Naive thymus-derived CD4-positive, alpha-beta T cell (primary cell): ENCODE measurements at regions of chr3 and their contacts with region 1.

Region 1: DNA sequence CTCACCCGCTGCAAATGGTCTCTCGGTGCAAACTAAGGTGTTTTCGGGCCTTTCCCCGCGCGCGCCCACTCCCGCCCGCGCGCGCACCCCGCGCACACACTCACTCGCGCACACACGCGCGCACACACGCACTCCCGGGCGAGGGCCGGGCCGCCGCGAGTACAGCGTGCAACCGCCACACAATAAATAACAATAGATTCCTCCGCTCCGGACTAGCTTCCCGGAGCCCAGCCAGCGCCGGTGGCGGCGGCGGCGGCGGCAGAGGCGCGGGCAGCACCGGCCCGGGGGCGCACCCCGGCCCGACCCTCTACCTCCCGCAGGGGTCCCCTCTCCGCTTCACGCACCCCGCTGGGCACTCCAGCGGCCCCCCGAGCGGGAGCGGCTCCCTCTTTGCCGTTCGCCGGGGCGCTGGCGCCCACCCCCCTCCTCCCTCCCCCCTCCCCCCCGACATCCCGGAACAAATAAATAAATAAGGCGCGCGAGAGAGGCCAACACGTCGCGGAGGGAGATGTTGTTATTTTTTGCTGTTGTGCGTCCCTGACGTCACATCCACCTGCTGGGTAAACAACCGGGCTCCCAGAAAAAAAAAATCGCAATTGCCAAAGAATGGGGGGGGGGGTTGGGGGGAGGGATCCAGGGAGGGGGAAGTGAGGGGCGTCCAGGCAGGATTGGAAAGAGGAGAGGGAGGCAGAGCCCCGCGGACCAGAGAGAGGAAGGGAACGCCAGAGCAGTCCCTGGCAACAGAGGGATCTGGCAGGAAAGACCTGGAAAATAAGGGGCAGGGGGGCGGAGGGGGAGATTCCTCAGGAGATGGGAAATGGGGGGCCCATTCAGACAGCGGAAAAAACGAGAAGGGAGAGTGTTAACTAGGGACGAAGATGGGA is at the start of gene FOXP1:
- DNase-seq: peak; percentile 62 to 80 (median 72)
- ATAC-seq: peak; percentile 77
- H3K4me3 ChIP-seq: peak within 1 kb of the TSS; percentile 76
- H3K4me3 Mint-ChIP-seq: peak within 1 kb of the TSS; percentile 94 to 99 (median 98)
- H3K27ac ChIP-seq: peak within 1 kb of the TSS; percentile 85
- H3K27ac Mint-ChIP-seq: peak within 1 kb of the TSS; percentile 94 to 99 (median 98)
- H3K4me1 ChIP-seq: peaks cover 7 to 16% of the 10 kb centered on the region in 2 donors
- H3K4me1 Mint-ChIP-seq: peaks cover 12 to 44% (median 33%) of the 10 kb centered on the region in 7 donors
- H3K27me3 ChIP-seq: no peaks in the 10 kb centered on the region
- H3K27me3 Mint-ChIP-seq: peaks cover 0 to 38% (median 0%) of the 10 kb centered on the region in 5 donors
- total RNA-seq, gene FOXP1: 104 to 537 (median 456) TPM

Region 2: DNA sequence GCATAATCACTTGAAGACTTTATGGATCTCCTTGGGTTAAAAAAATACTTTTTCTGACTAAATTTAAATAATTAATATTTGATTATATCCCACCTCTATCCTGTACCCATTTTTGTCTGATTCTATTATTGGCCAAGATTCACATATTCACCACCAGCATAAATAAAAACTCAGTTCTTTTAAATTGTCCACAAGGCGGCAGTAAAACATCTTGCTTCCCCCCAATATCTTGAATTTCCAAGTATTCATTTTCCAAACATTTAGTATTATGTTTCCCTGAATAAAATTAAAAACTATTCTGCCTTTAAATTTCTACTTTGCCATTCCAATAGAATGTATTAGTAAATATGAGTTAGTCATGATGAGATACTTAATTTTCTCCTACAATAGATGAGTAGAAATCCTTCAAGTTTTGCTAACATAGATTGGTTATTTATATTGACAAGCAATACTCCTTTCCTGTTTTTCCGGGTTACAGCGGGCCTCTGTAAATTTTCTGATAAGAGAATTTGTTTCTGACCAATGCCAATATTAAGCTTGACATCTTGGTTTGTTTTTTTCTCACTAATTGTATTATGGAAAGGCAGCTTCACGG is 1052.6 kb before region 1 on chr3:
- CTCF ChIA-PET with region 1: no interaction called
- POLR2A ChIA-PET with region 1: no interaction called
- intact Hi-C with region 1: loop called (anchors 1 kb)
- DNase-seq: peak in 4 of 9 donors; percentile 4 to 9 (median 6)
- ATAC-seq: no peak
- H3K4me3 ChIP-seq: no peak overlapping the region
- H3K4me3 Mint-ChIP-seq: no peak overlapping the region
- H3K27ac ChIP-seq: no peak overlapping the region
- H3K27ac Mint-ChIP-seq: no peak overlapping the region
- H3K4me1 ChIP-seq: no peaks in the 10 kb centered on the region
- H3K4me1 Mint-ChIP-seq: no peaks in the 10 kb centered on the region
- H3K27me3 ChIP-seq: no peaks in the 10 kb centered on the region
- H3K27me3 Mint-ChIP-seq: peaks cover 2 to 15% (median 10%) of the 10 kb centered on the region in 5 donors

Region 3: DNA sequence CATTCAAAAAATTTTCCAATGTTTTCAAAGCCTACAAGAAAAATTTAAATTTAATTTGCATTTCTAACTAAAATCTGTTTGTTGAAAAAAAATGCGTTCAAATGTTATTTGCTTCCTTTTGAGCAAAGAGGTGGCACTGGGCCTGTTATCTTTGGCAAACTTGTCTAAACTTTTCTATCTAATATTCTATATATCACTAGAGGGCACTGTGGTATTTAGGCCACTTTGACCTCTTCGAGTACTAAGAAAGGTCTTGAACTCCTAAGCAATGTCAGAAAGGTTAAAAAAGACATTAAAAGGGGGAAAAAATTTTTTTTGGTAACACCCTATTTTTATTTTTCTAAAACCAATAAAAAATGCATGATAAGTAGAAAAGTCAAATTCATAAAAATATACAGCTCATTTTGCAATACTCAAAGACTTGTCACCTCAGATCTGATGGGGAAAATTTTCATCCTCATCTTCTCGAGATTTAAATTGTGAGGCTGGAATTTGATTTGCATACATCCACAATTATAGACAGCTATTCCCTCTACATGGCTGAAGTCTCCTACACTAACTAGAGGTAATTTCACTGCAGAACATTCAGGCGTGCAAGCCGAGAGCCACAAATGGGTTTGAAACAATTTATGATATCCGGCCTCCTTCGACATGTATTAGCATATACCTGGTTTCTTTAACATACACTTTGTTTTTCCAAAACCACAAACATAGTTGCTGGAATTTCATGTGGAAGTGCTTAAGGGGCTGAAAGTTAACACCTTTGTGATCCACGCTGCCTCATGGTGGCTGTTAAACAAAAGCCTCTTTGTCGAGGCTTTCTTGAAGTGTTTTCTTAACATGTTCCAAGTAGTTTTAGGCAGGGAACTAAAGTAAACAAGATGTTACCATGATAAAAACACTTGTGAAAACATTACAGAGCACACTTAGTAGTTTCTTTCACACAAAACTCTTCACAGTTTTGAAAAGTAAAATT is 576.7 kb before region 1 on chr3:
- CTCF ChIA-PET with region 1: interaction called, 3 read pairs
- POLR2A ChIA-PET with region 1: no interaction called
- intact Hi-C with region 1: loop called (anchors 1 to 2 kb)
- DNase-seq: peak in 5 of 9 donors; percentile 25 to 45 (median 40)
- ATAC-seq: peak; percentile 54
- H3K4me3 ChIP-seq: no peak overlapping the region
- H3K4me3 Mint-ChIP-seq: peak overlapping the region in 5 of 10 donors; percentile 34 to 62 (median 49)
- H3K27ac ChIP-seq: peak overlapping the region; percentile 74
- H3K27ac Mint-ChIP-seq: peak overlapping the region in 8 of 9 donors; percentile 40 to 91 (median 87)
- H3K4me1 ChIP-seq: peaks cover 20 to 49% of the 10 kb centered on the region in 2 donors
- H3K4me1 Mint-ChIP-seq: peaks cover 35 to 84% (median 75%) of the 10 kb centered on the region in 7 donors
- H3K27me3 ChIP-seq: no peaks in the 10 kb centered on the region
- H3K27me3 Mint-ChIP-seq: no peaks in the 10 kb centered on the region

Region 4: GRCh38 chr3:71168880-71169411 is 414.9 kb before region 1 on chr3:
- CTCF ChIA-PET with region 1: no interaction called
- POLR2A ChIA-PET with region 1: no interaction called
- intact Hi-C with region 1: no loop called
- DNase-seq: no peak
- ATAC-seq: no peak
- H3K4me3 ChIP-seq: no peak overlapping the region
- H3K4me3 Mint-ChIP-seq: no peak overlapping the region
- H3K27ac ChIP-seq: no peak overlapping the region
- H3K27ac Mint-ChIP-seq: peak overlapping the region in 7 of 9 donors; percentile 28 to 72 (median 41)
- H3K4me1 ChIP-seq: no peaks in the 10 kb centered on the region
- H3K4me1 Mint-ChIP-seq: peaks cover 0 to 80% (median 58%) of the 10 kb centered on the region in 7 donors
- H3K27me3 ChIP-seq: no peaks in the 10 kb centered on the region
- H3K27me3 Mint-ChIP-seq: no peaks in the 10 kb centered on the region

Region 5: GRCh38 chr3:71226565-71227269 is 357.1 kb before region 1 on chr3:
- CTCF ChIA-PET with region 1: interaction called, 3 read pairs
- POLR2A ChIA-PET with region 1: no interaction called
- intact Hi-C with region 1: loop called (anchors 2 to 5 kb)
- DNase-seq: peak; percentile 34 to 89 (median 65)
- ATAC-seq: peak; percentile 86
- H3K4me3 ChIP-seq: peak overlapping the region; percentile 48
- H3K4me3 Mint-ChIP-seq: peak overlapping the region; percentile 51 to 85 (median 79)
- H3K27ac ChIP-seq: peak overlapping the region; percentile 59
- H3K27ac Mint-ChIP-seq: peak overlapping the region; percentile 85 to 97 (median 90)
- H3K4me1 ChIP-seq: peaks cover 21 to 64% of the 10 kb centered on the region in 2 donors
- H3K4me1 Mint-ChIP-seq: peaks cover 30 to 91% (median 88%) of the 10 kb centered on the region in 7 donors
- H3K27me3 ChIP-seq: no peaks in the 10 kb centered on the region
- H3K27me3 Mint-ChIP-seq: peaks cover 0 to 52% (median 0%) of the 10 kb centered on the region in 5 donors

Region 6: GRCh38 chr3:71397046-71397445 is 186.8 kb before region 1 on chr3:
- CTCF ChIA-PET with region 1: no interaction called
- POLR2A ChIA-PET with region 1: no interaction called
- intact Hi-C with region 1: loop called (anchors 5 to 10 kb)
- DNase-seq: no peak
- ATAC-seq: no peak
- H3K4me3 ChIP-seq: peak overlapping the region; percentile 3
- H3K4me3 Mint-ChIP-seq: peak overlapping the region in 9 of 10 donors; percentile 54 to 80 (median 73)
- H3K27ac ChIP-seq: peak overlapping the region; percentile 86
- H3K27ac Mint-ChIP-seq: peak overlapping the region in 8 of 9 donors; percentile 81 to 98 (median 92)
- H3K4me1 ChIP-seq: peaks cover 39 to 79% of the 10 kb centered on the region in 2 donors
- H3K4me1 Mint-ChIP-seq: peaks cover 23 to 95% (median 84%) of the 10 kb centered on the region in 7 donors
- H3K27me3 ChIP-seq: no peaks in the 10 kb centered on the region
- H3K27me3 Mint-ChIP-seq: peaks cover 0 to 52% (median 0%) of the 10 kb centered on the region in 5 donors

Region 7: GRCh38 chr3:72447059-72447946 is 863.5 kb after region 1 on chr3:
- CTCF ChIA-PET with region 1: no interaction called
- POLR2A ChIA-PET with region 1: no interaction called
- intact Hi-C with region 1: loop called (anchors 10 kb)
- DNase-seq: peak; percentile 86 to 98 (median 95)
- ATAC-seq: peak; percentile 99
- H3K4me3 ChIP-seq: peak overlapping the region; percentile 39
- H3K4me3 Mint-ChIP-seq: peak overlapping the region; percentile 47 to 98 (median 74)
- H3K27ac ChIP-seq: peak overlapping the region; percentile 79
- H3K27ac Mint-ChIP-seq: peak overlapping the region; percentile 25 to 83 (median 61)
- H3K4me1 ChIP-seq: peaks cover 23 to 31% of the 10 kb centered on the region in 2 donors
- H3K4me1 Mint-ChIP-seq: peaks cover 37 to 43% (median 41%) of the 10 kb centered on the region in 7 donors
- H3K27me3 ChIP-seq: no peaks in the 10 kb centered on the region
- H3K27me3 Mint-ChIP-seq: peaks cover 0 to 8% (median 6%) of the 10 kb centered on the region in 5 donors